Activated CD4-positive, alpha-beta T cell treated with anti-CD3 and anti-CD28 coated beads for 36 hours (primary cell): ENCODE measurements at regions of chr16 and their contacts with region 1.

Region 1: DNA sequence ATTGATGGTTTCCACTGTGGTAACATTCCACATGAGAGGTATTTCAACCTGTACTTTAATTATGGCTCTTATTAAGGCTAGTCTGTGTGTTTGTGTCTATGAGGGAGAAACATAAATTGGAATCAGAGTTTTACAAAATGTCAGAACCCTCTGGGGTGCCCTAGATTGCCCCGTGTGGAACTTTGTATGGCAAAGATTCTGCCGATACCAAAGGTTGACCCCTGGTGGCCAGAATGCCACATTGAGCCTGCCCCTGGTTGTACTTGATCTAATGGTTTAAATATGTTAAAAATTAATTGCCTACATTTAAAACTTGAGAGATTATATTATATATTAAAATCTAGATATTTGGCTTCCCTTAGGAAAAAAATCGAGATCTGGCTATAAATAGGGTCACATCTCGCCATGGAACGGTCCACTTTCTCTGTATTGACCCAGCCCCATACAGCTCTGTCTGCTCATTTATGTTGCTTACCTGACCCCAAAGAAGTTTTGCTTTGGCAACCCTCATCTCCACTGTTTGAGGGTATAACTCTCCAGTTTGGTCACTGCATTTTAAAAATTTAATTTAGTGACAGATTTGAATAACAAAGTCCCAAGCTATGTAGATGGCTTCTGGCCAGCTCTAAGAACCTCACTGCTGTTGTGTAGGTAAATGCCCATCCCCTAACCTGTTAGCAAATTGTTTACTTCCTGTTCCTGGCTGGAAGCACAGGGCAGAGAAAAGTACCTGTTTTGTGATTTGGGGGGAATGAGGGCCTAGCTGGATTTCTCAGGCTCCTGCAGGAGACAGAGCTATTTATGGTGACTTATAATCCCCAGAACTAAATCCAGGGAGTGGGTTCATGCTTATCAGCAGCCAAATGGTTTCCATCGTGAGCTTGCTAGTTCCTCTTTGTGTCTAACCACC is 95.0 kb downstream of the PLCG2 start:
- DNase-seq: peak; percentile 75
- ATAC-seq: peak; percentile 86
- H3K4me3 Mint-ChIP-seq: no peak overlapping the region
- H3K27ac Mint-ChIP-seq: no peak overlapping the region
- H3K4me1 Mint-ChIP-seq: peaks cover 3% of the 10 kb centered on the region
- H3K27me3 Mint-ChIP-seq: peaks cover 2% of the 10 kb centered on the region

Region 2: DNA sequence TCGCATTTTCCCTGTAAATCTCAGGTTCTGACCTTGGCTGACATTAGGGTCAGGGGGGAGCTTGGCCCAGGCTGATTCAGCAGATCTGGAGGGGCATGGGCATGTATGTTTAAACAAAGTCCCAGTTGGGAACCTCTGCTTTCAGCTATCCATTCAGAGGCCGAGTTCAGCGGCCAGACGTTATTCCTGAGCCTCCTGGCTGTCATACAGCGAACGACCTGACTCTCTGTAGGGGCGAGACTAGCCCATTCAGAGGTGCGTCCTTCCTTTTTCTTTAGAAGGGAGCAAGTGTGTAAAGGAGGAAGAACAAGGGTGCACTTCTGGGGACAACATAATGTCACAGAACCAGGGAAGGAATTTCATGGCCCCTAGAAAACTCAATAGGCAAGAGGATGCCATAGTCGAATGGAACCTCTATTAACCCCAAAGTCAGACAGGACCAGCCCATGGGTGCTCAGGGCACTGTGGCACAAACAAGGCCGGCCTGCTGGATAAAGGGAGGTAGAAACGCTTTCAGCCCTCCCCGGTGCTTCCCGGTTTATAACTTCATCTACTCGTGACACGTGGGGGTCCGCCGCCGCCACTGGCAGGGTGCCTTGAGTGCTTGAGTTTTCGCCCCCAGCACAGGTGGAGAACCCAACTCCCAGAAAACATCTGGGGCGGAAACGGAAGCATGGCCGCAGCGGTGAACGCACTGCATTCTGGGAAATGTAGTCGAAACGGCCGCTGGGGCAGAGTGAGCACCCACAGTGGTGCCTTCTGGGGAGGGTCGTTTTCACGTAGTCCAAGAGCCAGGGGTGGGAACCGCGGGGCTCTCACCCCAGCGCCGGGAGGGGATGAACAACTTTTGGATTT is 128.2 kb before region 1 on chr16:
- CTCF ChIA-PET with region 1: interaction called, 4 read pairs
- POLR2A ChIA-PET with region 1: no interaction called
- intact Hi-C with region 1: loop called in 1 of 2 experiments (anchors 5 kb)
- DNase-seq: peak; percentile 85
- ATAC-seq: peak; percentile 91
- H3K4me3 Mint-ChIP-seq: peak overlapping the region; percentile 73
- H3K27ac Mint-ChIP-seq: peak overlapping the region; percentile 87
- H3K4me1 Mint-ChIP-seq: peaks cover 16% of the 10 kb centered on the region
- H3K27me3 Mint-ChIP-seq: no peaks in the 10 kb centered on the region

Region 3: GRCh38 chr16:81778861-81779535 is 95.1 kb before region 1 on chr16 and contains the start of gene PLCG2:
- CTCF ChIA-PET with region 1: interaction called, 4 read pairs
- POLR2A ChIA-PET with region 1: no interaction called
- intact Hi-C with region 1: loop called in 1 of 2 experiments (anchors 1 kb)
- DNase-seq: peak; percentile 83
- ATAC-seq: peak; percentile 99
- H3K4me3 Mint-ChIP-seq: peak within 1 kb of the TSS; percentile 67
- H3K27ac Mint-ChIP-seq: no peak within 1 kb of the TSS
- H3K4me1 Mint-ChIP-seq: peaks cover 6% of the 10 kb centered on the region
- H3K27me3 Mint-ChIP-seq: peaks cover 38% of the 10 kb centered on the region
- total RNA-seq, gene PLCG2: 7.0 to 7.6 TPM

Region 4: GRCh38 chr16:81798311-81799137 is 75.6 kb before region 1 on chr16:
- CTCF ChIA-PET with region 1: interaction called, 4 read pairs
- POLR2A ChIA-PET with region 1: no interaction called
- intact Hi-C with region 1: loop called in 1 of 2 experiments (anchors 10 kb)
- DNase-seq: peak; percentile 70
- ATAC-seq: peak; percentile 79
- H3K4me3 Mint-ChIP-seq: peak overlapping the region; percentile 25
- H3K27ac Mint-ChIP-seq: peak overlapping the region; percentile 90
- H3K4me1 Mint-ChIP-seq: peaks cover 17% of the 10 kb centered on the region
- H3K27me3 Mint-ChIP-seq: no peaks in the 10 kb centered on the region

Region 5: GRCh38 chr16:81852351-81852750 is 21.7 kb before region 1 on chr16:
- CTCF ChIA-PET with region 1: interaction called, 13 read pairs
- POLR2A ChIA-PET with region 1: no interaction called
- intact Hi-C with region 1: no loop called
- DNase-seq: no peak
- ATAC-seq: no peak
- H3K4me3 Mint-ChIP-seq: no peak overlapping the region
- H3K27ac Mint-ChIP-seq: no peak overlapping the region
- H3K4me1 Mint-ChIP-seq: no peaks in the 10 kb centered on the region
- H3K27me3 Mint-ChIP-seq: peaks cover 4% of the 10 kb centered on the region

Region 6: DNA sequence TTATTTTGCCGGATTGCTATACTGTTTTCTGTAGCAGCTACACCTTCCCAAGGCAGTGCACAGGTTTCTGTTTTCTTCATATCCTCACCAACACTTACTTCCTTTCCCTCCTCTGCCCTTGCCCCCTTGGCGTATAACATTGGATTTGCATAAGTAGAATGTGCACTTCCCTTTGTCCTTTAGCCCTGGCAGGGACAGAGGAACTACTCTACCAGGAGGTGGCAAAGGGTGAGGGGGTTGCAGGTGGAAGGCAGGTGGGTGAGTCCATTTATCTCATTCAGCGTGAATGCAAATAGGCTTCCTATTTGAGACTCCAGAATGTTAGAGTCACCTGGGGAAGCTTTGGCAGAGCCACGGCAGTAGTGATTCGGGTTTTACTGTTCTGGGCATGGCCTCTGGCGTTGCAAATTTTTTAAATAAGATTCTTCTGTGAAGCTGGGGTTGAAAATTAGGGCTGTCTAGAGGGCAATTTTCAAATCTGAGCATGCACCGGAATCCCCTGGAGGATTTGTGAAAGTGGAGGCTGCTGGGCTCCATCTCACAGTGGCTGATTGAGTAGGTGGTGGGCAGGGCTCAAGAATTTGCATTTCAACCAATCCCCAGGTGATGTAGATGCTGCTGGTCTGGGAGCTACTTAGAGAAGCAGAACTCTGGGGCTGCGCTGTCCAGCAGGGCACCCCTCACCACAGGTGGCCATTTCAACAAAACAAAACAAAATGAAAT is 10.3 kb before region 1 on chr16:
- CTCF ChIA-PET with region 1: interaction called, 13 read pairs
- POLR2A ChIA-PET with region 1: no interaction called
- intact Hi-C with region 1: no loop called
- DNase-seq: no peak
- ATAC-seq: no peak
- H3K4me3 Mint-ChIP-seq: no peak overlapping the region
- H3K27ac Mint-ChIP-seq: no peak overlapping the region
- H3K4me1 Mint-ChIP-seq: no peaks in the 10 kb centered on the region
- H3K27me3 Mint-ChIP-seq: no peaks in the 10 kb centered on the region

Region 7: DNA sequence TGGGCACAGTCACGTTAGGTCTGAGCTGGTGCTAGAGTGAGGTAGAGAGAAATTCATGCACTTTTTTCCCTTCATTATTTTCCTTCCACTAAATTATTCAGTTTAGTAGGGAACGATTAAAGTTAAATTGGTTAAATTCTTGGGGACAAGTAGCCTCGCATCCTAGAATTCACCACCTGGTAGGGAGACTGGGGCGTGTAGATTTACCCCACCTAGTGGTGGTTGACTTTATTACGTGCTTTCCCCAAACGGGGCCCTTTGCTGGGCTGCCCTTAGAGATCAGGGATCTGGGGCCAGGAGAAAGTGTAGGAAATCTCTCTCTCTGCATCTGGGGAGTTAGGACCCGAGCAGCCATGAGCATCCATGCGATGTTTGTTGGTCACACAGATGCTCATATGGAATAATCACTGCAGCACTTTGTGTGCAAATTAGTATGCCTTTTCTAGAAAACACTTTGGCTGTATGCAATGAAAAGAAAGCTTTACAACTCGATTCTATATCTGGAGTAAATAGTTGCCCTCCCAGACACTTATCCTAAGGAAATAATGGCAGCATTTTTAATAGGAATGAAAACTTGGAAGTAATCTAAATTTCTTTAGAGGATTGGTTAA is 12.0 kb after region 1 on chr16:
- CTCF ChIA-PET with region 1: interaction called, 33 read pairs
- POLR2A ChIA-PET with region 1: no interaction called
- intact Hi-C with region 1: no loop called
- DNase-seq: peak; percentile 42
- ATAC-seq: peak; percentile 71
- H3K4me3 Mint-ChIP-seq: no peak overlapping the region
- H3K27ac Mint-ChIP-seq: no peak overlapping the region
- H3K4me1 Mint-ChIP-seq: no peaks in the 10 kb centered on the region
- H3K27me3 Mint-ChIP-seq: no peaks in the 10 kb centered on the region

Region 8: GRCh38 chr16:81921085-81921814 is 47.2 kb after region 1 on chr16:
- CTCF ChIA-PET with region 1: no interaction called
- POLR2A ChIA-PET with region 1: no interaction called
- intact Hi-C with region 1: no loop called
- DNase-seq: no peak
- ATAC-seq: no peak
- H3K4me3 Mint-ChIP-seq: no peak overlapping the region
- H3K27ac Mint-ChIP-seq: no peak overlapping the region
- H3K4me1 Mint-ChIP-seq: no peaks in the 10 kb centered on the region
- H3K27me3 Mint-ChIP-seq: peaks cover 2% of the 10 kb centered on the region

Region 9: GRCh38 chr16:82257956-82258355 is 383.9 kb after region 1 on chr16:
- CTCF ChIA-PET with region 1: no interaction called
- POLR2A ChIA-PET with region 1: no interaction called
- intact Hi-C with region 1: no loop called
- DNase-seq: no peak
- ATAC-seq: no peak
- H3K4me3 Mint-ChIP-seq: no peak overlapping the region
- H3K27ac Mint-ChIP-seq: no peak overlapping the region
- H3K4me1 Mint-ChIP-seq: no peaks in the 10 kb centered on the region
- H3K27me3 Mint-ChIP-seq: peaks cover 42% of the 10 kb centered on the region